ENCODE measurements at regions of chr5 and their contacts with region 1.

Region 1: GRCh38 chr5:113425914-113426313 is 8.9 kb downstream of the TSSK1B start:
- DNase-seq: no peak
- ATAC-seq: peak; percentile 23

Region 2: GRCh38 chr5:113059232-113060040 is 366.5 kb before region 1 on chr5:
- intact Hi-C with region 1: no loop called
- DNase-seq: peak; percentile 75
- ATAC-seq: peak; percentile 46

Region 3: GRCh38 chr5:113378959-113379541 is 46.9 kb before region 1 on chr5:
- intact Hi-C with region 1: no loop called
- DNase-seq: peak; percentile 38
- ATAC-seq: peak; percentile 52

Region 4: GRCh38 chr5:113450462-113450861 is 24.5 kb after region 1 on chr5:
- intact Hi-C with region 1: loop called (anchors 1 kb)
- DNase-seq: no peak
- ATAC-seq: no peak